Activated naive CD4-positive, alpha-beta T cell treated with anti-CD3 and anti-CD28 coated beads, Interleukin-2, amount 10 ng/mL, durations not matched to agents 7 days and 5 days (primary cell): ENCODE measurements at regions of chr2 and their contacts with region 1.

Region 1: DNA sequence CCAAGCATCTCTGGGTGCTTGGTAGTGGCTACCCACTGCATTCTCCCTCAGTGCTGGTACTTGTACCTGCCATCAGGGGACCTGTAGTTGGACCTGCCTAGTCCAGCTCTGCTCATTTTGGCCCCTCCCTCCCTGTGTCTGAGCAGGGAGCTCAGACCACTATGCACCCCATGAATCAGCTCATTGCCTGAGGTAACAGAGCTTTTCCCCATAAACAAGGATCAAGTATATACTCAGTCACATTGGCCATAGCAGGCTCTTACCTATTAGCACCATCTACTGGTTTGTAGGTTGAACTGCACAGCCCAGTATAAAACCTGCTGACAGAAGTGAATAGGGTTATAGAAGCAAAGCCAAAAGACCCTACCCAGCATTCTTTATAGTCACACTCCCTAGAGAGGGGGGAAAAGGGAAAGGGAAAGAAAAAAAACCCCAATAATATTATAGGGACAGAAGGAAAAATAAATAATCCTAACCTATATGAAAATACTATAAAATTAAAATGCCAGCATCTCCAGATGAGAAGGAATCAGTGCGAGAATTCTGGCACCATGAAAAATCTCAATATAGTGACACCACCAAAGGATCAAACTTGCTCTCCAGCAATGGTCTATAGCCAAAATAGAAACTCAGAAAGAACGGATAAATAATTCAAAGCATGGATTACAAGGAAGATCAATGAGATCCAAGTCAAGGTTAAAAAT is 6.9 kb upstream of the FLACC1 start:
- DNase-seq: no peak
- H3K4me3 Mint-ChIP-seq: no peak overlapping the region
- H3K27ac Mint-ChIP-seq: peak overlapping the region; percentile 60
- H3K4me1 Mint-ChIP-seq: peaks cover 34% of the 10 kb centered on the region
- H3K27me3 Mint-ChIP-seq: no peaks in the 10 kb centered on the region

Region 2: DNA sequence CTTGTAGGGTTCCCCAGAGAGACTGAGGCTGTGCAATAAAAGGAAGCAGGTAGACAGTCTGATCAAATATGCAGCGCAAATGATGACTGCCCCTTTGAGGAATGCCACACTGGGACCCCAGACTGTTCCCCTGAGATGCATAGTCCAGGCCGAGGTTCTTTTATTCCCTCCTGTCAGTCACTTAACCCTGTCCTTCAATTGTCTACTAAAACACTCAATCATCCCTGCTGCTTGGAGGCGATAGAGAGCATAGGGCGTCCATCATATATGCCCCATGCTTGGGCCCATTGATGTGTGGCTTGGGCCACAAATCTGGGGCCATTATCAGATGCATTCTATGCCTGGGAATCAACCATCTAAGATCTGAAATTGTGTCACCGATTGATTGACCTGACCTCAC is 119.2 kb before region 1 on chr2:
- CTCF ChIA-PET with region 1: interaction called, 14 read pairs
- DNase-seq: no peak
- H3K4me3 Mint-ChIP-seq: no peak overlapping the region
- H3K27ac Mint-ChIP-seq: no peak overlapping the region
- H3K4me1 Mint-ChIP-seq: peaks cover 41% of the 10 kb centered on the region
- H3K27me3 Mint-ChIP-seq: no peaks in the 10 kb centered on the region